CD8-positive, alpha-beta T cell (primary cell): ENCODE measurements at regions of chr21 and their contacts with region 1.

Region 1: DNA sequence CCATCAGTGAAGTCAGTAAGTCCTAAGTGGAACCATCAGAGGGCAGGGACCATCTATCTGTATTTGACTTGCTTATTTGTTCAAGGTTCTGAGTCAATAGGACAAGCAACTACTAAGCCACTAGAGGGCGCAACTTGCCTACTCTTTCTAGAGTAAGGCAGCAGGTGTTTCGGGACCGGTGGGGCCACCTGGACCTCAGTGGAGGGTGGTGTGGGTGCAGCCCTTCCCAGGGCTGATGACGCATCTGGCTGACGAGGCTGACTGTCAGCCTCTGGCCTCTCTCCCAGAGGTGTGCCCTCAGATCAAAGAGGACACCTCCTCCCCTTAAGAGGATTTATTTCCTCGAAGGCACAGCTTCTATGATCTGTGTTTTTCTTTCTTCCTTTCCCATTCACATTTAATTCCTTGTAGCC is 6.6 kb downstream of the CBR3 start:
- DNase-seq: peak; percentile 68 to 93 (median 86)
- ATAC-seq: peak; percentile 93
- H3K4me3 ChIP-seq: no peak overlapping the region
- H3K4me3 Mint-ChIP-seq: no peak overlapping the region
- H3K27ac ChIP-seq: peak overlapping the region; percentile 1 to 2
- H3K27ac Mint-ChIP-seq: peak overlapping the region; percentile 28
- H3K4me1 ChIP-seq: peaks cover 25% of the 10 kb centered on the region
- H3K4me1 Mint-ChIP-seq: peaks cover 27% of the 10 kb centered on the region
- H3K27me3 ChIP-seq: no peaks in the 10 kb centered on the region
- H3K27me3 Mint-ChIP-seq: no peaks in the 10 kb centered on the region
- CTCF ChIP-seq: peak; percentile 85

Region 2: DNA sequence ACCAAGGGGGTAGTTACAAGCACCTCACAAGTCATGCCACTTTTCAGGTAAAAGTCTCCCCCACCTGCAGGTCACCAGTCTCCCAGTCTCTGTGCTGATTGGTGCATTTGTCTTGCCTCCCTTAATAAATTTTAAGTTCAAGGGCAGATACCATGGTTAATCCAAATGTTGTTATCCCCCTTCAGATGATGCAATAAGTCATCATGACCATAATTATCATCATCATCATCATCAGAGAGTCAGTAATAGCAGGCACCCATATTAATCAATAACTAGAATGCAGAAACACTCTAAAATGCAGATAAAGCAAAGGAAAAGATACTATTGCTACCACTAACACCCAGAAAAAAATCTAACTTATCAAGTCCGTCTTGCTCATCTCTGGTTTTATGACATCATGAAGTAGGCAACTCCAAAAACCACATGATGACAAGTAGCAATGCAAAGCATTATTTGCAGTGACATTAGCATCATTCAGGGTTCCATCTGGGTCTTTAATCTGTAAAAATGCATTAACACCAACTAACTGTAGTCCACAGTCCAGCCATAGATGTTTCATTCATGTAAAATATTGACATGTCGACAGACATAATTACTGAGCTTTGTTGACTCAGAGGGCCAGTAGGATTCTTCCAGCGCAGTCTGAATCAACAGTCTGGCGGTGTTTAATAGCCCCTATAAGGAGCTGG is 600.4 kb before region 1 on chr21:
- CTCF ChIA-PET with region 1: no interaction called
- POLR2A ChIA-PET with region 1: no interaction called
- intact Hi-C with region 1: no loop called
- DNase-seq: no peak
- ATAC-seq: no peak
- H3K4me3 ChIP-seq: no peak overlapping the region
- H3K4me3 Mint-ChIP-seq: no peak overlapping the region
- H3K27ac ChIP-seq: no peak overlapping the region
- H3K27ac Mint-ChIP-seq: no peak overlapping the region
- H3K4me1 ChIP-seq: no peaks in the 10 kb centered on the region
- H3K4me1 Mint-ChIP-seq: no peaks in the 10 kb centered on the region
- H3K27me3 ChIP-seq: no peaks in the 10 kb centered on the region
- H3K27me3 Mint-ChIP-seq: peaks cover 7% of the 10 kb centered on the region
- CTCF ChIP-seq: no peak

Region 3: GRCh38 chr21:36125512-36126222 is 15.9 kb before region 1 on chr21:
- CTCF ChIA-PET with region 1: interaction called, 45 read pairs
- POLR2A ChIA-PET with region 1: no interaction called
- intact Hi-C with region 1: no loop called
- DNase-seq: peak in 7 of 9 experiments; percentile 39 to 78 (median 64)
- ATAC-seq: peak; percentile 71
- H3K4me3 ChIP-seq: no peak overlapping the region
- H3K4me3 Mint-ChIP-seq: no peak overlapping the region
- H3K27ac ChIP-seq: no peak overlapping the region
- H3K27ac Mint-ChIP-seq: no peak overlapping the region
- H3K4me1 ChIP-seq: peaks cover 2% of the 10 kb centered on the region
- H3K4me1 Mint-ChIP-seq: peaks cover 18% of the 10 kb centered on the region
- H3K27me3 ChIP-seq: no peaks in the 10 kb centered on the region
- H3K27me3 Mint-ChIP-seq: no peaks in the 10 kb centered on the region
- CTCF ChIP-seq: peak; percentile 96

Region 4: GRCh38 chr21:36174780-36175179 is 33.3 kb after region 1 on chr21:
- CTCF ChIA-PET with region 1: interaction called, 5 read pairs
- POLR2A ChIA-PET with region 1: interaction called, 4 read pairs
- intact Hi-C with region 1: loop called in 1 of 2 experiments (anchors 1 kb)
- DNase-seq: no peak
- ATAC-seq: no peak
- H3K4me3 ChIP-seq: no peak overlapping the region
- H3K4me3 Mint-ChIP-seq: no peak overlapping the region
- H3K27ac ChIP-seq: peak overlapping the region in 1 of 2 experiments; percentile 82
- H3K27ac Mint-ChIP-seq: peak overlapping the region; percentile 69
- H3K4me1 ChIP-seq: peaks cover 24% of the 10 kb centered on the region
- H3K4me1 Mint-ChIP-seq: peaks cover 17% of the 10 kb centered on the region
- H3K27me3 ChIP-seq: no peaks in the 10 kb centered on the region
- H3K27me3 Mint-ChIP-seq: no peaks in the 10 kb centered on the region
- CTCF ChIP-seq: no peak

Region 5: GRCh38 chr21:36209626-36210171 is 68.2 kb after region 1 on chr21:
- CTCF ChIA-PET with region 1: interaction called, 40 read pairs
- POLR2A ChIA-PET with region 1: interaction called, 3 read pairs
- intact Hi-C with region 1: loop called (anchors 1 kb)
- DNase-seq: peak; percentile 2 to 70 (median 46)
- ATAC-seq: no peak
- H3K4me3 ChIP-seq: no peak overlapping the region
- H3K4me3 Mint-ChIP-seq: no peak overlapping the region
- H3K27ac ChIP-seq: no peak overlapping the region
- H3K27ac Mint-ChIP-seq: no peak overlapping the region
- H3K4me1 ChIP-seq: no peaks in the 10 kb centered on the region
- H3K4me1 Mint-ChIP-seq: peaks cover 4% of the 10 kb centered on the region
- H3K27me3 ChIP-seq: no peaks in the 10 kb centered on the region
- H3K27me3 Mint-ChIP-seq: no peaks in the 10 kb centered on the region
- CTCF ChIP-seq: peak; percentile 36

Region 6: DNA sequence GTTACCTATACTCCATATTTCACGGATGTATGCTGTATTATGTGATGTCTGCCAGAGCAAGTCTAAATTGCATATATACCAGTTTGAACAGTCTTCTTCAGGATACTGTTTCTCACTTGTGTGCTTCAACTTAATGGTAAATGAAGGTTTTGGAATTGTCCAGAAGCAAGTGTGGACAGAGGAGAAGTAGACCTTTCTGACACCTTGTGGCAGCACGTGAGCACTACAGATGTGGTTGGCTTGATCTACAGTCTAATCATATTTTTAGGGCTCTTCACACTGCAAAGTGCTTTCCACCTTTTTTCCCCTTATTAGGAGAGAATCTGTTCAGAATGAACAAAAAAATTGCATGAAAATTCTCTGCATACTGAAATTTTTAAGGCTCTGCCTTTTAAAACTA is 189.4 kb after region 1 on chr21:
- CTCF ChIA-PET with region 1: interaction called, 49 read pairs
- POLR2A ChIA-PET with region 1: no interaction called
- intact Hi-C with region 1: loop called (anchors 1 kb)
- DNase-seq: peak in 7 of 9 experiments; percentile 16 to 75 (median 51)
- ATAC-seq: peak; percentile 92
- H3K4me3 ChIP-seq: no peak overlapping the region
- H3K4me3 Mint-ChIP-seq: no peak overlapping the region
- H3K27ac ChIP-seq: no peak overlapping the region
- H3K27ac Mint-ChIP-seq: peak overlapping the region; percentile 76
- H3K4me1 ChIP-seq: peaks cover 33% of the 10 kb centered on the region
- H3K4me1 Mint-ChIP-seq: peaks cover 51% of the 10 kb centered on the region
- H3K27me3 ChIP-seq: no peaks in the 10 kb centered on the region
- H3K27me3 Mint-ChIP-seq: no peaks in the 10 kb centered on the region
- CTCF ChIP-seq: peak; percentile 86

Region 7: DNA sequence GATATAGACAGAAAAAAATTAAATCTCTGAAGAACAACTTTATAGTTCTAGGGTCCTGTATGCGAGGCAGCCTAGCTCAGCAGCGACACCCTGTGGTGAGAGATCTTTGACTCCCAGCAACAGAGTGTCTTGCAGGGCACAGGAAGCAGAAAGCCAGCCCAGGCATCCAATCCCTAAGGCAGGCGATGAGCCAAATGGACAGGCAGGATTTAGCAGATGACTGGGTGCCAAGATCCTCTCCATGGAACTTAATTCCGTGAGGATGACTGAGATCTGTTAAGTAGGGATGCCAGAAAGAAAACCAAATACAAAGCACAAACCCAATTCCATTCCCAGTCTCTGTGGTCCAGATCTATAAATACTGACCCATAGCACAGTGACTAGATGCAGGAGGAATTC is 786.2 kb after region 1 on chr21:
- CTCF ChIA-PET with region 1: no interaction called
- POLR2A ChIA-PET with region 1: no interaction called
- intact Hi-C with region 1: loop called (anchors 5 kb)
- DNase-seq: peak; percentile 43 to 79 (median 71)
- ATAC-seq: peak; percentile 52
- H3K4me3 ChIP-seq: no peak overlapping the region
- H3K4me3 Mint-ChIP-seq: no peak overlapping the region
- H3K27ac ChIP-seq: no peak overlapping the region
- H3K27ac Mint-ChIP-seq: no peak overlapping the region
- H3K4me1 ChIP-seq: peaks cover 13% of the 10 kb centered on the region
- H3K4me1 Mint-ChIP-seq: peaks cover 10% of the 10 kb centered on the region
- H3K27me3 ChIP-seq: no peaks in the 10 kb centered on the region
- H3K27me3 Mint-ChIP-seq: no peaks in the 10 kb centered on the region
- CTCF ChIP-seq: peak; percentile 83